ENCODE measurements at regions of chr10 and their contacts with region 1.

Region 1: GRCh38 chr10:110137142-110137545 is 70.3 kb upstream of the MXI1 start:
- DNase-seq: no peak
- ATAC-seq: peak; percentile 81

Region 2: DNA sequence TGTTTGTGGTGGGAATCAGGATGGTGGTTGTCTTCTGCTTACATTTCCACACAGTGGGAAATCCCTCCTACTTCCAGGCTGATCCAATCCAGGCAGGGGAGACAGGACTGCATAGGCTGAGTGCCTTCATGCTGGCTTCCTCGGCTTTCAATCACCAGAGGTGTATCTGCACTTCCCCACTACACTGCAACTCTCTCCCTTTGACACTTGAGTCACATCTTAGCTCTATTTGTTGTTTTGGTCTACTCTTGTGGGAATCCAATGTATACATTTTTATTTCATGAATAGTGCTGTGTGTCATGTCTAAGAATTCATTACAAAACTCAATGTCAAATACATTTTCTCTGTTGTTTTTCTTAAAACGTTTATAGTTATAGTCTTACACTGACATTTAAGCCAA is 949.5 kb before region 1 on chr10:
- intact Hi-C with region 1: no loop called
- DNase-seq: no peak
- ATAC-seq: no peak

Region 3: DNA sequence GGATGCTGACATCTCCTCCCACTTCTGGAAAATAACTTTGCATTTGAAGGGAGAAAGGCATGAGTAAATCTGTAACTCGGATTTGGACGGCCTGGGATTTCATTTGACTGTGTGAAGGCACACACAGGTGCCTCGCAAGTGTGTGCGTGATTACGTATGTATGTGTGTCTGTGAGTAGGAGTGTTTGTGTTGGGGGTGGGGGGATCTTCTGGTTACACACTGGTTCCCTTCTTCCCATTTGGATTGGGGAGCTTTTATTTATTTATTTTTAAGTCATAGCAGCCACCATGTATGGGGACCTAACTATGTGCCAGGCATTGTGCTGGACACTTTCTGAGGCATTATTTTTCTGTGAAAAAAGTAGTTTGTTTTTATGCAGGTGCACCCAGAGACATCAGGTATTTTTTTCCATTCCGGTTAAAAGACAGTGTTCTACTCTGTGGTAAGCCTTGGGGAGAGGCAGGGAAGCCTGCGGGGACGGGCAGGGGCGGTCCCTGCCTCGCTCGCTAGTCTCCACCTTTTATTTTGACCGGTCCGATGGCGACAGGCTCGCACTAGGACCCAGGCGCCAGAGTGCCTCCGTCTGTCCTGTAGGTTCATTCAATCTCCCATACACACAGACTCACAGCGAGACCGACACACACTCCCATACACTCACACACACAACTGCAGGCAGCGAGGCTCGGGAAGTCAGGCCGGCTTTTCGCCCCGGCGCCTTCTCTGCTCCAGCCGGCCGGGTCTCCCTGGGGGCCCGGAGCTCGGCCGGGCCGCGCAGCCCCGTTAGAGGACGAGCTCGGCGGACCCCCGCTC is 70.1 kb after region 1 on chr10 and contains the start of gene MXI1:
- intact Hi-C with region 1: loop called (anchors 5 kb)
- DNase-seq: peak; percentile 87
- ATAC-seq: peak; percentile 24
- total RNA-seq, gene MXI1: 75.2 TPM

Region 4: DNA sequence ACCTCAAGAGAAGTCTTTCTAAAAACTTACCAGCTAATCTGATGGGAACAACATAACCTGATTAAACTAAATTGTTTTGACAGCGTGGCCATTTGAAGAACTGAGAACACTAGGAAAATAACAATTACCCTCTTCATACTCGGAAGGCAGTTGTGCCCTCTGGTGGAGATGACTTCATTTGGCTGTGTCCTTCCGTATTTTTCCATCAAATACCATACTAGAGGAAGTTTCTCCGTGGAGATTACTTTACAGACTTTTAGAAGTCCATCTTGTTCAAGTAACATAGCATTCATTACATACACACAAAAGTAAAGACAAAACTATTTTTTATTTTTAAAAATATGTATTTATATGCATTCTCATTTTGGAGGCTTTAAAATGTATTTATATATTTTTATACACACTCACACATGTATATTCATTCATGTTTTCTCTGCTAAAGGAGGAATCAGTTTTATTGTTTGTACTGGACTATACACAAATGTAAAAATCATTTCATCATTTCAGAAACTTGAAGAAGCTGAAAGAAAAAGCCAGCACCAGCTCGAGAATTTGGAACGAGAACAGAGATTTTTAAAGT is 142.4 kb after region 1 on chr10:
- intact Hi-C with region 1: loop called (anchors 5 kb)
- DNase-seq: no peak
- ATAC-seq: peak; percentile 87

Measured in Right ventricle myocardium superior (tissue), 1 donor.